ENCODE measurements at regions of chr15 and their contacts with region 1.

Region 1: GRCh38 chr15:74552773-74553441 is 11.9 kb downstream of the ARID3B start:
- DNase-seq: no peak
- H3K4me3 ChIP-seq: no peak overlapping the region
- H3K4me3 Mint-ChIP-seq: no peak overlapping the region
- H3K27ac ChIP-seq: no peak overlapping the region
- H3K27ac Mint-ChIP-seq: no peak overlapping the region
- H3K4me1 ChIP-seq: peaks cover 9% of the 10 kb centered on the region in 2 donors
- H3K4me1 Mint-ChIP-seq: peaks cover 16% of the 10 kb centered on the region
- H3K27me3 ChIP-seq: no peaks in the 10 kb centered on the region
- H3K27me3 Mint-ChIP-seq: peaks cover 0 to 3% (median 1%) of the 10 kb centered on the region in 3 donors
- CTCF ChIP-seq: no peak

Region 2: DNA sequence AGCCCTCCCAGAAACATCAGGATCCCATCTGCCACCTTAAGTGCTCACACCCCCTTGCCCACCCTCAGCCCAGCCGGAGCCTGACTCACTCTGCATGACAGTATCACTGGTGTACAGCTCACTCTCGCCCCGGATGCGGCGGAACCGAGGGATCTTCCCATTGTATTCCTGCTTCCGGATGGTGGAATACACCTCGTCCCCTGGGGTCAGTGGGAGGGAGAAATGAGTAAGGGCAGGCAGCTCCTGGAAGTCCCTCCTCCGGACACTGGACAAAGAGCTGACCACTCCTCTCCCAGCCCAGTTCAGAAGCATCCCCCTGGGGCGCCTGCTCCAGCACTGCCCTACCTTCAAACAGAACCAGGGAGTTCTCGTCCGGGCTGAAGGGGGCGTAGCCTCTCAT is 135.7 kb before region 1 on chr15:
- intact Hi-C with region 1: no loop called
- DNase-seq: no peak
- H3K4me3 ChIP-seq: no peak overlapping the region
- H3K4me3 Mint-ChIP-seq: no peak overlapping the region
- H3K27ac ChIP-seq: no peak overlapping the region
- H3K27ac Mint-ChIP-seq: peak overlapping the region in 1 of 7 donors; percentile 68
- H3K4me1 ChIP-seq: peaks cover 7 to 11% of the 10 kb centered on the region in 2 donors
- H3K4me1 Mint-ChIP-seq: peaks cover 16% of the 10 kb centered on the region
- H3K27me3 ChIP-seq: no peaks in the 10 kb centered on the region
- H3K27me3 Mint-ChIP-seq: peaks cover 0 to 2% (median 2%) of the 10 kb centered on the region in 3 donors
- CTCF ChIP-seq: no peak

Region 3: GRCh38 chr15:74497584-74497983 is 55.3 kb before region 1 on chr15:
- intact Hi-C with region 1: loop called in 1 of 2 experiments (anchors 5 kb)
- DNase-seq: no peak
- H3K4me3 ChIP-seq: no peak overlapping the region
- H3K4me3 Mint-ChIP-seq: no peak overlapping the region
- H3K27ac ChIP-seq: no peak overlapping the region
- H3K27ac Mint-ChIP-seq: peak overlapping the region in 1 of 7 donors; percentile 43
- H3K4me1 ChIP-seq: no peaks in the 10 kb centered on the region
- H3K4me1 Mint-ChIP-seq: peaks cover 2% of the 10 kb centered on the region
- H3K27me3 ChIP-seq: no peaks in the 10 kb centered on the region
- H3K27me3 Mint-ChIP-seq: peaks cover 0 to 3% (median 0%) of the 10 kb centered on the region in 3 donors
- CTCF ChIP-seq: no peak